Activated T-helper 1 cell treated with anti-CD3 and anti-CD28 coated beads, Interleukin-12 subunit alpha, Interleukin-12 subunit beta, Interleukin-2, Interleukin-4 antibody, amounts not matched to agents 30 ng/mL and 10 ng/mL and 1 ng/mL, durations not matched to agents 14 hours and 24 hours and 36 hours (primary cell): ENCODE measurements at regions of chr10 and their contacts with region 1.

Region 1: GRCh38 chr10:96586419-96587263 is at the start of gene TM9SF3:
- DNase-seq: peak; percentile 86
- H3K4me3 Mint-ChIP-seq: peak within 1 kb of the TSS; percentile 96
- H3K27ac Mint-ChIP-seq: peak within 1 kb of the TSS; percentile 89
- H3K4me1 Mint-ChIP-seq: peaks cover 43% of the 10 kb centered on the region
- H3K27me3 Mint-ChIP-seq: peaks cover 9% of the 10 kb centered on the region
- total RNA-seq, gene TM9SF3: 81.7 and 87.7 TPM in 2 replicates

Region 2: GRCh38 chr10:95561182-95562075 is 1025.2 kb before region 1 on chr10 and contains the start of gene SORBS1:
- intact Hi-C with region 1: loop called (anchors 2 kb)
- DNase-seq: peak; percentile 90
- H3K4me3 Mint-ChIP-seq: peak within 1 kb of the TSS; percentile 94
- H3K27ac Mint-ChIP-seq: peak within 1 kb of the TSS; percentile 77
- H3K4me1 Mint-ChIP-seq: peaks cover 15% of the 10 kb centered on the region
- H3K27me3 Mint-ChIP-seq: peaks cover 39% of the 10 kb centered on the region
- total RNA-seq, gene SORBS1: 0.59 and 0.73 TPM in 2 replicates

Region 3: DNA sequence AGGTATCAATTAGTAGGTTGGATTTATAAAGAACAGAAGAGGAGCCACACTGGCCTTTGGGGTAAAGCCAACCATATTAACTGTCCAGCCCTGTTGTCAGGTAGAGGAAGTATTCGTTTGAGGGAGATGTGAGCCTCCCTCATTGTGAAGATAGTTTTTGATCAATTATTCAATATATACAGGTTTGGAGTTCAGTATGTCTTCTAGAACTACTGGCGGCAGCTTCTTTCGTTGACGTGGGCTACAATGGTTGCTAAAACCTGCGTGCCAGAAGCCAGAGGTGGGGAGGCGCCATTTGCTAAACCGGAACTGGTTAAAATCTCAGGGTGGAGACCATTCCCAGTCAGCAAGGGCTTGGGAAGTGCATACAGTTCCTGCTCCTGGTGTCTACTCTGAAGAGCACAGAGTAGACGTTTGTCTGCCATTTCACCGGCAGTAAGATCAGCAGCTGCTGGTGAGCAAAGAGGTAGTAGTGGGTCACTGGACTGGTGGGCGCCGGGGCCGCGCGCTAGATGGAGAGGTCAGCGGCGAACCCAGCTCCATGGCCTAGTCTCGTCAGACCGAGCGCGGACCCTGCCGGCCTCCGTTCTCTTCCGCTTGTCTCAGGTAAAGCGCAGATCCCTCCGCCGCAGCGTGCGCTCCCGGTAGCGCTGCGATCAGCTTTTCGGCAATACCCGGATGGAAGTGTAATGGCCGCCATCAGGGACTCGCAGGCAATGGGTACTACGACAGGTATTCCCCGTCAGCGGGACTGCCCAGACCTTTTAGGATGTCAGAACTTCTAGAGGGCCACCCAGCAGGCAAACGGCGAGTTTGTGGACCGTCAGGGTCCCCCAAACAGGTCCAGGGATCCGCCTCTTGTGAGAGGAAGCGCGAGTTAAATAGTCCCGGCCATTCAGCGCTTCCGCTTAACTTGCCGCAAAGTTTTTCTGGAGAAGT is 457.0 kb before region 1 on chr10 and contains the start of gene ZNF518A:
- intact Hi-C with region 1: loop called (anchors 2 kb)
- DNase-seq: peak; percentile 86
- H3K4me3 Mint-ChIP-seq: peak within 1 kb of the TSS; percentile 90
- H3K27ac Mint-ChIP-seq: peak within 1 kb of the TSS; percentile 99
- H3K4me1 Mint-ChIP-seq: peaks cover 33% of the 10 kb centered on the region
- H3K27me3 Mint-ChIP-seq: peaks cover 27% of the 10 kb centered on the region
- total RNA-seq, gene ZNF518A: 14.3 and 16.2 TPM in 2 replicates

Region 4: DNA sequence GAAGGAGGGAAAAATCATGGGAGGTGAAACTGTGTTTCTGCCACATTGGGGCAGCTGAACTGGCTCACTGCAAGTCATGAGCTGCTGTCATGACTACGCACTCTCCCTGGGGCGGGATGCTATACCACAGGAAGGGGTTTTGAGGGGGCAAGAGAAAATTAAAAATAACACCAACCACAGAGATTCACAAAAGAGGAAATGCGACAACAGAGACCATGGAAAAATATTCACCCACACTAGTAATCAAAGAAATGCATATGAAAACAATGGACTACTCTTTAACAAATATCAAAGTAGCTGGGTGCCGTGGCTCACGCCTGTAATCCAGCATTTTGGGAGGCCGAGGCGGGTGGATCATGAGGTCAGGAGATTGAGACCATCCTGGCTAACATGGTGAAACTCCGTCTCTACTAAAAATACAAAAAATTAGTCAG is 65.4 kb after region 1 on chr10:
- intact Hi-C with region 1: loop called (anchors 5 kb)
- DNase-seq: no peak
- H3K4me3 Mint-ChIP-seq: peak overlapping the region; percentile 49
- H3K27ac Mint-ChIP-seq: peak overlapping the region; percentile 86
- H3K4me1 Mint-ChIP-seq: peaks cover 41% of the 10 kb centered on the region
- H3K27me3 Mint-ChIP-seq: no peaks in the 10 kb centered on the region

Region 5: GRCh38 chr10:97217299-97217698 is 630.7 kb after region 1 on chr10:
- intact Hi-C with region 1: loop called (anchors 5 kb)
- DNase-seq: no peak
- H3K4me3 Mint-ChIP-seq: no peak overlapping the region
- H3K27ac Mint-ChIP-seq: no peak overlapping the region
- H3K4me1 Mint-ChIP-seq: peaks cover 27% of the 10 kb centered on the region
- H3K27me3 Mint-ChIP-seq: no peaks in the 10 kb centered on the region

Region 6: GRCh38 chr10:97412891-97413304 is 826.3 kb after region 1 on chr10:
- intact Hi-C with region 1: loop called (anchors 5 kb)
- DNase-seq: peak; percentile 52
- H3K4me3 Mint-ChIP-seq: peak overlapping the region; percentile 47
- H3K27ac Mint-ChIP-seq: peak overlapping the region; percentile 95
- H3K4me1 Mint-ChIP-seq: peaks cover 55% of the 10 kb centered on the region
- H3K27me3 Mint-ChIP-seq: no peaks in the 10 kb centered on the region

Region 7: GRCh38 chr10:98134431-98135221 is 1548.0 kb after region 1 on chr10 and contains the start of gene R3HCC1L:
- intact Hi-C with region 1: loop called (anchors 10 kb)
- DNase-seq: peak; percentile 93
- H3K4me3 Mint-ChIP-seq: peak within 1 kb of the TSS; percentile 95
- H3K27ac Mint-ChIP-seq: peak within 1 kb of the TSS; percentile 89
- H3K4me1 Mint-ChIP-seq: peaks cover 44% of the 10 kb centered on the region
- H3K27me3 Mint-ChIP-seq: no peaks in the 10 kb centered on the region
- total RNA-seq, gene R3HCC1L: 20.0 and 20.1 TPM in 2 replicates